Calu3 (cell line): ENCODE measurements at regions of chr19 and their contacts with region 1.

Region 1: GRCh38 chr19:36378625-36379509 is at the start of gene ZFP14:
- DNase-seq: peak; percentile 97
- H3K4me3 Mint-ChIP-seq: peak within 1 kb of the TSS; percentile 73
- H3K27ac Mint-ChIP-seq: peak within 1 kb of the TSS; percentile 40
- H3K4me1 Mint-ChIP-seq: peaks cover 13% of the 10 kb centered on the region
- H3K27me3 Mint-ChIP-seq: no peaks in the 10 kb centered on the region
- CTCF ChIP-seq: no peak
- total RNA-seq, gene ZFP14: 4.6 and 4.8 TPM in 2 replicates

Region 2: GRCh38 chr19:36331353-36332228 is 47.3 kb before region 1 on chr19:
- CTCF ChIA-PET with region 1: no interaction called
- intact Hi-C with region 1: no loop called
- DNase-seq: peak; percentile 88
- H3K4me3 Mint-ChIP-seq: peak overlapping the region; percentile 62
- H3K27ac Mint-ChIP-seq: peak overlapping the region; percentile 47
- H3K4me1 Mint-ChIP-seq: no peaks in the 10 kb centered on the region
- H3K27me3 Mint-ChIP-seq: no peaks in the 10 kb centered on the region
- CTCF ChIP-seq: no peak

Region 3: DNA sequence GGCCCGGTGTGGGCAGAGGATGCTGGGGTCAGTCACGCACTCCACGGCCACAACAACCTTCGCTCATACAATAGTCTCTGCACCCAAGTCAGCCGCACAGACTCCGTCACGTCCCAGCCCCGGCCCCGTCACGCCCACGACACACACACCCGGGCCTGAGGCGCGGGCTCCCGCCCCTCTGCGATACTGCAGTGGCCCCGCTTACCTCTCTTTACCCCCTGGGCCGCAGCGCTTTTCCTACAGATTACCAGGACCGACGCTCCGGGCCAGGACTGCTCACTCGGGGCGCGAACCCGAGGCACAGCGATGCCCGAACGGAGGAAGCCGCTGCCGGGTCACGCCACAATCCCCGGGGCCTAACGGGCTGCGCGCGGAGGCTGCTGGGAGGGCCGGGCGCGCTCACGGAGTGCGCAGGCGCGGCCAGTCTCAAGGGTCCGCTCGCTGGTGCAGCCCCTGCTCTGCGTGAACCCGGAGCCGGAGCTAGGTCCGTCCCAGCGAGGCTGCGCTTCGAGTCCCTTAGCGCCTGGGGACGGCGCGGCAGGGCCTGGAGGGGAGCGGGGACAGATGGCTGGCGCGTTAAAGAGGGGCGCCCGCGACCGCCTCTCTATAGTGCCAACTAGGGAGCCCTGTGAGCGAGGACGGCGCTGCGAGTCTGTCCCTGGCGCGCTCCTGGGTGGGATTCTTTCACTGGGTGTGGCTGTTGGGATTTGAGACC is 39.6 kb after region 1 on chr19 and contains the start of gene ZFP82:
- CTCF ChIA-PET with region 1: interaction called, 11 read pairs
- intact Hi-C with region 1: no loop called
- DNase-seq: no peak
- H3K4me3 Mint-ChIP-seq: no peak within 1 kb of the TSS
- H3K27ac Mint-ChIP-seq: no peak within 1 kb of the TSS
- H3K4me1 Mint-ChIP-seq: no peaks in the 10 kb centered on the region
- H3K27me3 Mint-ChIP-seq: no peaks in the 10 kb centered on the region
- CTCF ChIP-seq: no peak
- total RNA-seq, gene ZFP82: not detected in 2 replicates